Mammary epithelial cell (primary cell): ENCODE measurements at regions of chr10 and their contacts with region 1.

Region 1: GRCh38 chr10:8053446-8054290 is 820 bp upstream of the GATA3 start:
- DNase-seq: peak; percentile 89
- H3K4me3 ChIP-seq: peak overlapping the region; percentile 86 to 90 (median 87)
- H3K27ac ChIP-seq: peak overlapping the region; percentile 70
- H3K4me1 ChIP-seq: peaks cover 46% of the 10 kb centered on the region
- H3K27me3 ChIP-seq: no peaks in the 10 kb centered on the region
- CTCF ChIP-seq: peak; percentile 71 to 97

Region 2: DNA sequence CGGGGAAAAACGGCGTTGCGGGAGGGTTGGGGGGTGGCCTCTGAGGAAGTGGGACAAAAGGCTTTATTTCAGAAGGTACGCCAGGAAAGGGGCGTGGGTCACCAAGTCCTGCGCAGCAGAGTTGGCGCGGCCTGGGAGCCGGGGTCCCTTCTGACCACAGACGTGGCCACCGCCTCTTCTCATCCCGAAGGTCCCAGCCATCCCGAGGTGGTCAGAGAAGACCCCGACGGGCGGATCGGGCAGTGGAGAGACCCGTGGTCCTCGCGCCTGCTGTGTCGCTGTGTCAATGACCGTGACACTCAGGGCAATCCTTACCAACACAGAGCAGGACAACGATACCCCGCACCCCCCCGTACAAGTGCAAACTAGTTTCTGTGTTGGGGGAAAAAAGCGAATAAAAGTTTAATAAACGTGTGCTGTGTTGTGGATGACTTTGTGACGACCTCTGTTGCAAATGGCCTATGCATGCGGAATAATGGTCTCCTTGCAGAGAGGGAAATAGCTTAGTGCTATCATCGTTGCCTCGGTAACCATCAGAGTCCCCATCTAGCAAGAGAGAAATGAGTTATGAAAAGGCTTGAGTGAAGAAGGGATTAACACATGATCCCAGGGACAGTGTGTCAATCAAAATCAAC is 18.5 kb before region 1 on chr10:
- CTCF ChIA-PET with region 1: no interaction called
- dilution Hi-C with region 1: no loop called
- in situ Hi-C with region 1: no loop called
- intact Hi-C with region 1: no loop called
- DNase-seq: no peak
- H3K4me3 ChIP-seq: no peak overlapping the region
- H3K27ac ChIP-seq: no peak overlapping the region
- H3K4me1 ChIP-seq: peaks cover 2% of the 10 kb centered on the region
- H3K27me3 ChIP-seq: peaks cover 42% of the 10 kb centered on the region
- CTCF ChIP-seq: no peak

Region 3: DNA sequence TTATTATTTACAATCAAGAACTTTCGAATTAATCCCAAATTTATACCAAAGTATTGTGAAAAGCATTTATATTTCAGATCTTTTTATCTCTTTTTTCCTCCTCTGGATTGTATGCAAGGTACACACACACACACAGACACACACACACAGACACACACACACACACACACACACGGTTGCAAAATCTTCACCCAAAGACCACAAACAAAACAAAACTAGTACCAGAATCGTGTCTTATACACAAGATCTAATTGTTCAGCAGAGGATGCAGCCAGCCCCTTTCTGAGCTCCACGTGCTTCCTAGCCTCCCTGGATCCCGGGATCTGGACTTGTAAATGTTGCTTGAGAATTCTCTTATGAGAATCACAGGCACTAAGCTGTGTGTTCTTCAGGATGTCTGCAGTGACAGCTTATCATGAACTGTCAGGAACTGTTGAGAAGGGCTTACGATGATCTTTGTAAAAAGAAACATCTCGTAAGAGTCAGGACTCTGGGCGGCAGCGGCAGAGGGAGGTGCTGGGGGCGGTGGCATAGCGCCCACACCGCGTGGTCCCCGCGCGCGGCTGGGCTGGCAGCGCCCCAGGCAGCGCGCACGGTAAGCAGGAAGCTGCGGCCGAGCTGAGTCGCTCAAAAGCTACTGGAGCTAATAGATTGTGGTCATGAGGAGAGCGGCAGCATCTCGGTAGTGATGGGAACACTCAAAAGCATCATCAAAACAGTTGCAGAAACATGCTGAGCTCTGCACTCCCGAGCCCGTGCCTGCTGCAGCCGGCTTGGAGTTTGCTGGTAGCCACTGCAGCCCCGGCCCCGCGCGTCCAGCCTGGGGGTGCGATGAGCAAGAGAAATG is 278.4 kb after region 1 on chr10:
- CTCF ChIA-PET with region 1: no interaction called
- dilution Hi-C with region 1: no loop called
- in situ Hi-C with region 1: no loop called
- intact Hi-C with region 1: loop called (anchors 10 kb)
- DNase-seq: peak; percentile 86
- H3K4me3 ChIP-seq: peak overlapping the region; percentile 24 to 47 (median 38)
- H3K27ac ChIP-seq: no peak overlapping the region
- H3K4me1 ChIP-seq: peaks cover 9% of the 10 kb centered on the region
- H3K27me3 ChIP-seq: peaks cover 2% of the 10 kb centered on the region
- CTCF ChIP-seq: no peak

Region 4: GRCh38 chr10:8473205-8473604 is 419.5 kb after region 1 on chr10:
- CTCF ChIA-PET with region 1: no interaction called
- dilution Hi-C with region 1: no loop called
- in situ Hi-C with region 1: no loop called
- intact Hi-C with region 1: loop called (anchors 10 kb)
- DNase-seq: no peak
- H3K4me3 ChIP-seq: no peak overlapping the region
- H3K27ac ChIP-seq: no peak overlapping the region
- H3K4me1 ChIP-seq: no peaks in the 10 kb centered on the region
- H3K27me3 ChIP-seq: no peaks in the 10 kb centered on the region
- CTCF ChIP-seq: peak in 1 of 2 donors; percentile 19

Region 5: GRCh38 chr10:8758029-8758428 is 704.4 kb after region 1 on chr10:
- CTCF ChIA-PET with region 1: no interaction called
- dilution Hi-C with region 1: no loop called
- in situ Hi-C with region 1: no loop called
- intact Hi-C with region 1: loop called (anchors 10 kb)
- DNase-seq: peak; percentile 91
- H3K4me3 ChIP-seq: no peak overlapping the region
- H3K27ac ChIP-seq: no peak overlapping the region
- H3K4me1 ChIP-seq: peaks cover 10% of the 10 kb centered on the region
- H3K27me3 ChIP-seq: no peaks in the 10 kb centered on the region
- CTCF ChIP-seq: no peak

Region 6: GRCh38 chr10:9081253-9081652 is 1027.6 kb after region 1 on chr10:
- CTCF ChIA-PET with region 1: no interaction called
- dilution Hi-C with region 1: no loop called
- in situ Hi-C with region 1: no loop called
- intact Hi-C with region 1: loop called (anchors 5 kb)
- DNase-seq: peak; percentile 49
- H3K4me3 ChIP-seq: no peak overlapping the region
- H3K27ac ChIP-seq: no peak overlapping the region
- H3K4me1 ChIP-seq: peaks cover 3% of the 10 kb centered on the region
- H3K27me3 ChIP-seq: no peaks in the 10 kb centered on the region
- CTCF ChIP-seq: no peak